ENCODE measurements at regions of chr3 and their contacts with region 1.

Region 1: DNA sequence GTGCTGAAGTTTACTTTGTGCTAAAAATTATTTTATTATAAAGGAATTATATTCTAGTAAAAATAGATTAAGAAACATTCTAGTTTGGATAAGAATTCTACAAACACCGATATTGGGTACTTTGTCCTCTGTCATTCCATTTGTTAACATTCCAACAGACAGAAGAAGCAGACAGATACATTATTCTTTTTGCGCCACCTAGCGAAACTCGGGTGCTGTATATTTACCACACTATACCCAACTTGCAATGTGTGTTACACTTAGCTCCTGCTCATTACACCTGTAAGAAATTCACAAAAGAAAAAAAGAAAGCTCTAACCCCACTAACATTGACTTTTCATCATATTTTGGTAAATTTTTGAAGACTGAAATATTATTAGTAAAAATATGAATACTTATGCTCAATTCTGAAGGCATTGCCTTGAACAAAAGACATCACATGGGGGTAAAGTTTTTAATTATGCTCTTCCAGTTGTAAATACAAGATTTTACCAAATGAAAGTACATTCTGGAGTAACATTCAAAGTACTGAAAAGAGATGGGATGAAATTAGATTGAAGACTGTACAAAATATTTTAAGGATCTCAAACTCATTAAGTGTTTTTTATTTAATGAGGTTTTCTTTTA is 136.5 kb upstream of the MLF1 start:
- DNase-seq: peak; percentile 77
- H3K4me3 ChIP-seq: no peak overlapping the region
- H3K27ac ChIP-seq: no peak overlapping the region
- H3K4me1 ChIP-seq: no peaks in the 10 kb centered on the region
- H3K27me3 ChIP-seq: no peaks in the 10 kb centered on the region
- CTCF ChIP-seq: peak; percentile 44 to 55
- POLR2A ChIP-seq: no peak

Region 2: GRCh38 chr3:157618075-157618760 is 816.3 kb before region 1 on chr3:
- CTCF ChIA-PET with region 1: interaction called, 23 read pairs
- POLR2A ChIA-PET with region 1: no interaction called
- dilution Hi-C with region 1: no loop called
- intact Hi-C with region 1: loop called (anchors 1 kb)
- DNase-seq: peak; percentile 66
- H3K4me3 ChIP-seq: no peak overlapping the region
- H3K27ac ChIP-seq: no peak overlapping the region
- H3K4me1 ChIP-seq: peaks cover 3% of the 10 kb centered on the region
- H3K27me3 ChIP-seq: peaks cover 2 to 44% of the 10 kb centered on the region in 2 experiments
- CTCF ChIP-seq: peak; percentile 38 to 45
- POLR2A ChIP-seq: no peak

Region 3: GRCh38 chr3:157865352-157866000 is 569.0 kb before region 1 on chr3:
- CTCF ChIA-PET with region 1: interaction called, 58 read pairs
- POLR2A ChIA-PET with region 1: no interaction called
- dilution Hi-C with region 1: no loop called
- intact Hi-C with region 1: loop called (anchors 1 kb)
- DNase-seq: peak; percentile 26
- H3K4me3 ChIP-seq: no peak overlapping the region
- H3K27ac ChIP-seq: no peak overlapping the region
- H3K4me1 ChIP-seq: no peaks in the 10 kb centered on the region
- H3K27me3 ChIP-seq: no peaks in the 10 kb centered on the region
- CTCF ChIP-seq: peak; percentile 74 to 79
- POLR2A ChIP-seq: no peak

Region 4: GRCh38 chr3:158091531-158091930 is 343.0 kb before region 1 on chr3:
- CTCF ChIA-PET with region 1: interaction called, 27 read pairs
- POLR2A ChIA-PET with region 1: no interaction called
- dilution Hi-C with region 1: no loop called
- intact Hi-C with region 1: loop called (anchors 1 kb)
- DNase-seq: peak; percentile 34
- H3K4me3 ChIP-seq: no peak overlapping the region
- H3K27ac ChIP-seq: no peak overlapping the region
- H3K4me1 ChIP-seq: no peaks in the 10 kb centered on the region
- H3K27me3 ChIP-seq: peaks cover 43 to 86% of the 10 kb centered on the region in 2 experiments
- CTCF ChIP-seq: peak; percentile 27 to 29
- POLR2A ChIP-seq: no peak

Region 5: GRCh38 chr3:158109804-158110657 is 324.5 kb before region 1 on chr3 and contains the start of gene RSRC1:
- CTCF ChIA-PET with region 1: interaction called, 13 read pairs
- POLR2A ChIA-PET with region 1: no interaction called
- dilution Hi-C with region 1: no loop called
- intact Hi-C with region 1: no loop called
- DNase-seq: peak; percentile 89
- H3K4me3 ChIP-seq: peak within 1 kb of the TSS; percentile 75 to 95 (median 83)
- H3K27ac ChIP-seq: peak within 1 kb of the TSS; percentile 9
- H3K4me1 ChIP-seq: peaks cover 12% of the 10 kb centered on the region
- H3K27me3 ChIP-seq: peaks cover 23 to 46% of the 10 kb centered on the region in 2 experiments
- CTCF ChIP-seq: no peak
- POLR2A ChIP-seq: peak; percentile 74
- total RNA-seq, gene RSRC1: 24.8 and 25.4 TPM in 2 replicates

Region 6: DNA sequence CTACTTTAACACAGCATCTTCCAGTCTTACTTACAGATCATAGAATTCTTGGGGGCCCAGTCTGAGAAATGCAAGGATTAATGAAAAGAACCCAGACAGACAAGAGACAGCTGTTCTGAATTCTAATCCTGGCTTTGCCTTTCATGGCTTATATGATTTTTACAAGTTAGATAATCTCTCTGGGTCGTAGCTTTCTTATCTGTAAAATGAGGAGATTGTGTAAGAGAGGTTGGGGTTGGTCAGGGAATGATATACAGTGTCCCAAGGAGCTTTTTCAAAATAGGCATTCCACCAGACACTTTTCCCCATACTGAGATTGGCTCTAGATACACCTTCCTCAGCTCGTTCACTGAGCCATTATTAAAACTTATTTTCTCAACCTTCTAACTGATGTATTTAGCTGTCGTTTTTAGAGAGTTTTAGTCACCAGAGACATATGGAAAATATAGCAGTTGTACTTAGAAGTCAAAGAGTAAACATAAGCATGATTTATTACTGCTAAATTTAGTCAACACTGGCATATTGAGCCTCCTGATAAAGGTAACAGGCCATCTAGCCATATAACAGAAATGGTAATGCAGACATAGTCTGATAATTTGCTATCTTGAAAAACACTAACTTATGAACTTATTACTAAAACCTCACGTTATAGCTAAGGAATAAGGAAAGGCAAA is 26.5 kb before region 1 on chr3:
- CTCF ChIA-PET with region 1: interaction called, 10 read pairs
- POLR2A ChIA-PET with region 1: no interaction called
- dilution Hi-C with region 1: no loop called
- intact Hi-C with region 1: no loop called
- DNase-seq: no peak
- H3K4me3 ChIP-seq: no peak overlapping the region
- H3K27ac ChIP-seq: no peak overlapping the region
- H3K4me1 ChIP-seq: no peaks in the 10 kb centered on the region
- H3K27me3 ChIP-seq: no peaks in the 10 kb centered on the region
- CTCF ChIP-seq: no peak
- POLR2A ChIP-seq: no peak

Region 7: GRCh38 chr3:158465074-158465473 is 30.5 kb after region 1 on chr3:
- CTCF ChIA-PET with region 1: interaction called, 10 read pairs
- POLR2A ChIA-PET with region 1: no interaction called
- dilution Hi-C with region 1: no loop called
- intact Hi-C with region 1: no loop called
- DNase-seq: no peak
- H3K4me3 ChIP-seq: no peak overlapping the region
- H3K27ac ChIP-seq: no peak overlapping the region
- H3K4me1 ChIP-seq: no peaks in the 10 kb centered on the region
- H3K27me3 ChIP-seq: no peaks in the 10 kb centered on the region
- CTCF ChIP-seq: no peak
- POLR2A ChIP-seq: no peak

Measured in endothelial cell of umbilical vein (primary cell).